PC-9 (cell line): ENCODE measurements at regions of chr10 and their contacts with region 1.

Region 1: GRCh38 chr10:78255796-78256638 is 222.4 kb downstream of the RPS24 start:
- DNase-seq: peak; percentile 76 to 96
- H3K4me3 ChIP-seq: 0 out of 2 replicates have a peak overlapping the region, but pooled peaks have one; percentile 7
- H3K27ac ChIP-seq: peak overlapping the region; percentile 92
- H3K4me1 ChIP-seq: peaks cover 17% of the 10 kb centered on the region
- H3K27me3 ChIP-seq: no peaks in the 10 kb centered on the region
- CTCF ChIP-seq: no peak

Region 2: GRCh38 chr10:78082636-78083035 is 173.4 kb before region 1 on chr10:
- CTCF ChIA-PET with region 1: no interaction called
- POLR2A ChIA-PET with region 1: no interaction called
- intact Hi-C with region 1: no loop called
- DNase-seq: peak in 1 of 2 experiments; percentile 31
- H3K4me3 ChIP-seq: no peak overlapping the region
- H3K27ac ChIP-seq: no peak overlapping the region
- H3K4me1 ChIP-seq: no peaks in the 10 kb centered on the region
- H3K27me3 ChIP-seq: peaks cover 71% of the 10 kb centered on the region
- CTCF ChIP-seq: no peak

Region 3: GRCh38 chr10:78302989-78303854 is 47.2 kb after region 1 on chr10:
- CTCF ChIA-PET with region 1: no interaction called
- POLR2A ChIA-PET with region 1: no interaction called
- intact Hi-C with region 1: loop called (anchors 2 kb)
- DNase-seq: peak; percentile 83 to 98
- H3K4me3 ChIP-seq: peak overlapping the region; percentile 66
- H3K27ac ChIP-seq: peak overlapping the region; percentile 42; the same call in 1 of the 2 replicates
- H3K4me1 ChIP-seq: peaks cover 10% of the 10 kb centered on the region
- H3K27me3 ChIP-seq: no peaks in the 10 kb centered on the region
- CTCF ChIP-seq: peak; percentile 81